Right lobe of liver (tissue), 6 donors: ENCODE measurements at regions of chr7 and their contacts with region 1.

Region 1: GRCh38 chr7:74449809-74450397 is 3.8 kb upstream of the GTF2IRD1 start:
- DNase-seq: peak in 1 of 3 donors; percentile 58
- ATAC-seq: peak; percentile 52 to 66 (median 59)
- H3K4me3 ChIP-seq: no peak overlapping the region
- H3K27ac ChIP-seq: no peak overlapping the region
- H3K4me1 ChIP-seq: peaks cover 0 to 8% (median 2%) of the 10 kb centered on the region in 4 donors
- H3K27me3 ChIP-seq: no peaks in the 10 kb centered on the region
- CTCF ChIP-seq: peak; percentile 74 to 88 (median 80)
- POLR2A ChIP-seq: no peak

Region 2: DNA sequence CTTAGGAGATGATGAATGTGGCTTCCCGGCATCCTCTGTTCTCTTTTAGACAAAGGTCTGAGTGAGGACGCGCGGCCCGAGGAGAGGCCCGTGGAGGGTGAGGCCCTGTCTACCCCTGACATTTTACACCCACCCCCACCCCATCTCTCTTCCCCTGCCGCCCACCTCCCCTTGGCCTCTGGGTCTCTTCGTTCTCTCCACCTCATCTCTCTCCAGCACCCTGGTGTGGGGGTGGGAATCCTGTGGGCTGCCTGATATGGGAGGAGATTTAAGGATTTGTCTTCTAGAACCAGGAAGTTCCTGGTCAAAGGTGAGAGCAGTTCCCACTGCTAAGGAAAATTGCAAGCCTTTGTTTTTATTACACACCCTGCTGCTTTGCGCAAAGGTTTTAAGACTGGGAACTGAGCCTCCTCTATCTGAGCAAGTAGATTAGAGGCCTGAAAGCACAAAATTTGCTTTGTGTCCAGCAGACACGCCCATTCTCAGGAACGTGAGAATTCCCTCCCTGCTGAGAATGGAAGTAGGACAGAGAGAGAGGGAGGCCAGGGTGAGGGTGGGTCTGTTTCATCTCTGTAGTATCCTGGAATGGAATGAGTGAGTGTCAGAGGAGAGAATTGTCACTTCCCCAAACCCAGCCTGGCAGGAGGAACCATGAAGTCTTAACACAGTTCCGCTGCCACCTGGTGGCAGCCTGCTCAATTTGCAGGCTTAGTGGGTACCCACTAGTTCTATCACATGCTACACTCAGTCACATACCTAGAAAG is 95.0 kb after region 1 on chr7:
- intact Hi-C with region 1: loop called in 1 of 2 experiments (anchors 10 kb)
- DNase-seq: peak in 1 of 3 donors; percentile 32
- ATAC-seq: peak; percentile 63 to 84 (median 78)
- H3K4me3 ChIP-seq: no peak overlapping the region
- H3K27ac ChIP-seq: no peak overlapping the region
- H3K4me1 ChIP-seq: no peaks in the 10 kb centered on the region
- H3K27me3 ChIP-seq: no peaks in the 10 kb centered on the region
- CTCF ChIP-seq: peak; percentile 43 to 64 (median 51)
- POLR2A ChIP-seq: no peak

Region 3: DNA sequence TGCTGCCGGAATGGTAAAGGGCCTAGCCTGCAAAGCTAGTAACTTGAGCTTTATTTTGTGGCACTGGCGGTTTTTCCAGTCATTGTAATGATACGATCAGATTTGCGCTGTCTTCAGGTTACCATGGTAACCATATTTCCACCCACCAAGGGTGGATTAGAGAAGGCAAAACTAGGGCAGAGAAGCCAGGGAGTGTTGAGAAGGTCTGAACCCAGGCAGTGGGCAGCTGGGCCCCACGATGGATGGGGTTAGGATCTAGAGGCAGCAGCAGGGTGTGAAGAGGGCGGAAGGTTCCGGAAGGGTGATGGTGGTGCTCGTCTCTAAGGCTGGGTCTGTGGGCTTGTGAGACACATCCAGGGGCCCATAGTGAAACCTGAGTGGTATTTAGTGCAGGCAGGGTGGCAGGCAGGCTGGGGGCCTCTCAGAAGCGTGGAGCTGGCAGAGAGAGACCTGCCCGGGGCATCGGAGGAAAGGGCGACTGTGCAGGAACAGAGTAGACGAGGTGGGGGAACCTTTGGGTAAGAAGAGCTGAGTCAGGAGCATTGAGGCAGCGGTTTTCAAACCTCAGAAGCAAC is 119.7 kb after region 1 on chr7:
- intact Hi-C with region 1: loop called in 1 of 2 experiments (anchors 10 kb)
- DNase-seq: no peak
- ATAC-seq: no peak
- H3K4me3 ChIP-seq: no peak overlapping the region
- H3K27ac ChIP-seq: no peak overlapping the region
- H3K4me1 ChIP-seq: no peaks in the 10 kb centered on the region
- H3K27me3 ChIP-seq: no peaks in the 10 kb centered on the region
- CTCF ChIP-seq: no peak
- POLR2A ChIP-seq: no peak